B cell (primary cell): ENCODE measurements at regions of chr3 and their contacts with region 1.

Region 1: DNA sequence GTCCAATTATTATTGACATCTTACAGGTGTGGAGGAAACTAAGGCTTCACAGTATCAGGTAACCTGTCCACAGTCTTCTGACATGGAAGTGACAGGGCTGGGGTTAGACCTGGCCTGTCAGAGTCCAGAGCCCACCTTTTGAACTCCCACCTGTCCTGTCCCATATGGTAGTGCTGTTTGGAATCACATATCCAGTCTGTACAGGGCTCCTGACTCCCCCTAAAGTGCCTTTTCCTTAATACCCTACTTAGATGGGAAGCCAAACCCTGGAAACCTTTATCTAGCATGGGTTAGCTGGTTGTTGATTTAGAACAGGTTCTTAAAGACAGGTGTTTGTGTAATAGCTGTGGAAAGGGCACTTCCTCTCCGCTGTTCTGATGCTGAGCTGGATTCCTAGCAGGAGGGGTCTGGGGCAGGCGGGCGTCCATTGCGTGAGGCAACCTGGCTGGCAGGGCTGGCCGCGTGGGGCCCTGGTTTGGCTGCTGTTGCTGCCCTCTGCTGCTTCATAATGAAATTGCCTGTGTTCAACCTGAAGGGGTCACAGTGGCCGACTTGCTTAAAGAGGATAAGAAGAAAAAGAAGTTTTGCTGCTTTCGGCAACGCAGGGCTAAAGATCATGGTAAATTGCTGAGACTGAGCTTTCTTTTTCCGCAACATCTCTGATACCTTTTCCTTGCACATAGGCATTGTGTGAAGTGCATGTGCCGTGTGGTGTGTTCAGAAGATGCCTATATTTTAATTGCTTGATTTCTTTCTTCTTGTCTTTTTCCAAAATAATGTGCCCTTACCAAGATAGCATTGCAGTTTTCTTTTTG is 136.2 kb downstream of the CHDH start:
- DNase-seq: peak; percentile 72
- ATAC-seq: peak; percentile 63
- H3K4me3 ChIP-seq: no peak overlapping the region
- H3K4me3 Mint-ChIP-seq: no peak overlapping the region
- H3K27ac ChIP-seq: no peak overlapping the region
- H3K27ac Mint-ChIP-seq: no peak overlapping the region
- H3K4me1 ChIP-seq: peaks cover 0 to 10% of the 10 kb centered on the region in 2 donors
- H3K4me1 Mint-ChIP-seq: peaks cover 5% of the 10 kb centered on the region
- H3K27me3 ChIP-seq: peaks cover 0 to 10% (median 0%) of the 10 kb centered on the region in 4 experiments
- H3K27me3 Mint-ChIP-seq: no peaks in the 10 kb centered on the region
- CTCF ChIP-seq: peak; percentile 80

Region 2: DNA sequence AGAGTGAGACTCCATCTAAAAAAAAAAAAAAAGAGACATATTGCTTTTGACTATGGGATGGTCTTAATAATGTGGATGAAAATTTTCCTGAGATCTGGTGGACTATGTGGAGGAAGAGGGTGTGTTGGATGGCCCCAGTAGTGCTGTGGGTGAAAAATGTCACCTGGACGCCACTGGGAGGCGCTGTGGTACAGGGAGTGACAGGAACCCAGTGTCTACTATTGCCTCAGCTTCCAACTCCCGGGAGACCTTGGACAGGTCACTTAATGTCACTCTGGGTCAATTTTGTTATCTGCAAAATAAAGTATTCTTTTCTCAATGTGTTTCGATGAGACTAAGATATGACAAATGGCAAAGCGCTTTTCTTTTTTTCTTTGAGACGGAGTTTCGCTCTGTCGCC is 335.0 kb before region 1 on chr3:
- CTCF ChIA-PET with region 1: interaction called, 16 read pairs
- POLR2A ChIA-PET with region 1: no interaction called
- intact Hi-C with region 1: no loop called
- DNase-seq: peak; percentile 59
- ATAC-seq: no peak
- H3K4me3 ChIP-seq: no peak overlapping the region
- H3K4me3 Mint-ChIP-seq: no peak overlapping the region
- H3K27ac ChIP-seq: no peak overlapping the region
- H3K27ac Mint-ChIP-seq: no peak overlapping the region
- H3K4me1 ChIP-seq: no peaks in the 10 kb centered on the region
- H3K4me1 Mint-ChIP-seq: no peaks in the 10 kb centered on the region
- H3K27me3 ChIP-seq: peaks cover 0 to 9% (median 0%) of the 10 kb centered on the region in 4 experiments
- H3K27me3 Mint-ChIP-seq: peaks cover 36% of the 10 kb centered on the region
- CTCF ChIP-seq: peak; percentile 78

Region 3: DNA sequence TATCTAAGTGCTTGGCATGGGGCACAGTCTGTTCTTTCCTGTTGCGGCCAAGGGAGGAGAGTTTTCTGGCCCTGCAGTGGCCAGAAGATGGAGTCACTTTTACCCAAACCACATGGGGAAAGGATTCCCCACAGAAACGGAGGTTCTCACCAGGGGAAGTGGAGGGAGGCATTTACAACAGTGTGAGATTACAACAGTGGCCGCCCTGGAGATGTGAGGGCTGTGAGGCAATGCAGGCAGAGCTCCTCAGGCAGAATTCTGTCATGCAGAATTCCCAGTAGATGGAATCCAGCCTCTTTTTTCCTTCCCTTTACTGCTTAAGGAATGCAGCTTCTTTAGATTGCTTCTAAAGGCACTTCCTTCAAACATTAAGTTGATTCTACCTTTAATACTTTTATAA is 132.6 kb before region 1 on chr3:
- CTCF ChIA-PET with region 1: no interaction called
- POLR2A ChIA-PET with region 1: no interaction called
- intact Hi-C with region 1: no loop called
- DNase-seq: no peak
- ATAC-seq: no peak
- H3K4me3 ChIP-seq: no peak overlapping the region
- H3K4me3 Mint-ChIP-seq: no peak overlapping the region
- H3K27ac ChIP-seq: no peak overlapping the region
- H3K27ac Mint-ChIP-seq: no peak overlapping the region
- H3K4me1 ChIP-seq: no peaks in the 10 kb centered on the region
- H3K4me1 Mint-ChIP-seq: no peaks in the 10 kb centered on the region
- H3K27me3 ChIP-seq: peaks cover 0 to 8% (median 2%) of the 10 kb centered on the region in 4 experiments
- H3K27me3 Mint-ChIP-seq: peaks cover 7% of the 10 kb centered on the region
- CTCF ChIP-seq: no peak